GM12878 (cell line): ENCODE measurements at regions of chr2 and their contacts with region 1.

Region 1: DNA sequence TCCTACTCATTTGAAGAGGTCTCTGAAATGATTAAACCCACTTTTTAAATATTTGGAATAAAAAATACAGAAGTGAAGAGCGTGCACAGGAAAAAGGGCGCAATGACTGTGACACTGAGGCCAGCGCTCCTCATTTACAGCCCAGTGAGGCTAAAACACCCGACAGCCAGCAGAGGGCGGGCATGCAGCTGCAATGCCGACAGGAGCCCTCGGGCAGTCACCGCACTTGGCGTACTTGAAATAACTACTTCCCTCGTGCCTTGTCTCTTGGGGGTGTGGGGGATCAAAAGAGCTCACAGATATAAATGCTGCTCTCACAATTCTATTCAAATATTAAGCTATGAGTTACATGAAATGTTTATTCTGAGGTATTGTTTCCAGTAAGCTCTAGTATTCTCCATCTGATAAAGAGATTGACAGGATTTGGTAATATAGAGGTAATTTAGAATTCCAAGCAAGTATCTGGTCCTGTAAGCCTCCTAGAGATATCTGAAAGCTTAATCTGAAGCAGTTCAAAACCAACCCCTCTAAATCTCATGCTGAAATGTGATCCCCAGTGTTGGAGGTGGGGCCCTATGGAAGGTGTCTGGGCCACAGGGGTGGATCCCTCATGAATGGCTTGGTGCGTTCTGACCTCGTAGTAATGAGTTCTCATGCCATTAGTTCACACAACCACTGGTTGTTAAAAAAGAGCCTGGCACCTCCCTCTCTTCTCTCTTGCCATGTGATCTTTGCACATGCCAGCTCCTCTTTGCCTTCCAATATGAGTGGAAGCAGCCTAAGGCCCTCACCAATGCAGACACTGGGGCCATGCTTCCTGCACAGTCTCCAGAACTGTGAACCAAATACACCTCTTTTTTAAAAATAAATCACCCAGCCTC is 93.6 kb downstream of the ZAP70 start:
- DNase-seq: peak; percentile 9
- ATAC-seq: peak; percentile 100
- H3K4me3 ChIP-seq: no peak overlapping the region
- H3K27ac ChIP-seq: no peak overlapping the region
- H3K4me1 ChIP-seq: no peaks in the 10 kb centered on the region
- H3K27me3 ChIP-seq: no peaks in the 10 kb centered on the region
- CTCF ChIP-seq: peak; percentile 93 to 95 (median 93); a peak in 5 of 6 replicates
- EP300 ChIP-seq: no peak
- POLR2A ChIP-seq: no peak
- RAD21 ChIP-seq: peak; percentile 99

Region 2: DNA sequence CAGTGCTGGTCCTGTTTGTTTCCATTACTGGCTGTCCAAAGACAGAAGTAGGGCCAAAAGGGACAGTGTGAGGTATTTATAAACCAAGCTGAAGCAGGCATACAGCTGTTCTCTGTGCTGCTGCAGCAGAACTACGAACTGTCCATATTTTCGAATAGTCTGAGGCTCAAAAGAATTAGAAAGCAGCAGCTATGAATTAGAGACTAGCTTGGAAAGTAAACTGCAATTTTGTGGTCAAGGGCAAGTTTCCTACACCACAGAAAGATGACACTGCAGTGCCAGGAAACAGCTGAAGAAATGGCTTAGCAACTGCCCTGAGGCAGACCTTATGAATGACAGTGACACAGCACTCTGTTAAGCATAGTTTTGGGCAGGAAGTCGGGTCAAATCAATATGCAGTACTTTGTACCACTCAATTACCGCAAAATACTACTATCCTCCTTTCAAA is 63.4 kb after region 1 on chr2:
- CTCF ChIA-PET with region 1: interaction called, 8 read pairs
- POLR2A ChIA-PET with region 1: no interaction called
- RAD21 ChIA-PET with region 1: interaction called, 11 read pairs
- SMC1A ChIA-PET with region 1: interaction called, 12 read pairs
- in situ Hi-C with region 1: no loop called
- intact Hi-C with region 1: no loop called
- DNase-seq: peak; percentile 87
- ATAC-seq: peak; percentile 100
- H3K4me3 ChIP-seq: no peak overlapping the region
- H3K27ac ChIP-seq: peak overlapping the region; percentile 33; the same call in 1 of the 2 replicates
- H3K4me1 ChIP-seq: peaks cover 20% of the 10 kb centered on the region
- H3K27me3 ChIP-seq: no peaks in the 10 kb centered on the region
- CTCF ChIP-seq: peak in 2 of 3 experiments; percentile 13 to 66; a peak in 3 of 6 replicates
- EP300 ChIP-seq: peak in 1 of 2 experiments; percentile 41; a peak in 1 of 4 replicates
- POLR2A ChIP-seq: no peak
- RAD21 ChIP-seq: peak; percentile 64

Region 3: DNA sequence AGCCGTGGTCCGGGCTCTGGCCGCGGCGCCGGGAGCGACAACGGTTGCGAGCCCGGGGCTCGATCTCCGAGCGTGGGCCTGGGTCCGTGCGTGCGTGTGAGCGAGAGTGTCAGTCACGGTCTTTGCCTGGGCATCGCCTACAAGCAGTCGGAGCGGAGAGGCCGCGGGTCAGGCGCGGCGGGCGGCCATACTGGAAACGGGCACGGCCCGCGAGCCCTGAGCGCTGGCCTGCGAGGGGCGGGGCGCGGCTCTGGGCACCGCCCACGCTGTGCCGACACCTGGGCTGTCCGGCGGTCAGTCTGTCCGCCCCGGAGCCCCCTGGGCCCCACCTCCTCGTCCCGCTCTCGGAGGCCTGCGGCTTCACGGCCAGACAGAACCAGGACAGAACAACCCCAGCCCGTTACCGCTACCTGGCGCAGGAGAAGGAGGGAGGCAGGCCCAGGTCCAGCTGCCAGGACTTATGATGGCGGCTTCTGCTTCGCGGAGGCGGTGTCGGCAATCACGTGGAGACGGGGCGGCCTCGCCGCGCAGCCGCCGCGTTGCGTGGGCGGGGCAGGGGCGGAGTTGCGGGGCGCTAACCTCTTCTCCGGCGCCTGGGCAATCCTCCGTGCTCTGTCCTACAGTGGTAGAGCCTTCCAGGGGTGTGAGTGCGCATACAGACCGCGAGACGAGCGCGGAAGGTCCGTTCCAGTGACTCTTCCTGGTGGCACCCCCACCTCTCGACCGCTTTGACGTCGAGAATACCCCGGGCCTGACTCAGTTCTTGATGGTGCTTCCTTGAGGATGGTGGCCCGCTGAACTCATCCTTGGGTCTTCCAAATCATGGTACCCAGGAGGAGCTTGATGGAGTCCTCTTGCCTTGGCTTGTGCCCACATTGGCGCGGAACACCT is 189.0 kb after region 1 on chr2 and contains the start of gene TMEM131:
- CTCF ChIA-PET with region 1: interaction called, 7 read pairs
- POLR2A ChIA-PET with region 1: interaction called, 4 read pairs
- RAD21 ChIA-PET with region 1: interaction called, 9 read pairs
- SMC1A ChIA-PET with region 1: interaction called, 9 read pairs
- in situ Hi-C with region 1: no loop called
- intact Hi-C with region 1: loop called (anchors 1 kb)
- DNase-seq: peak; percentile 74
- ATAC-seq: peak; percentile 85
- H3K4me3 ChIP-seq: peak within 1 kb of the TSS; percentile 83
- H3K27ac ChIP-seq: peak within 1 kb of the TSS; percentile 94
- H3K4me1 ChIP-seq: peaks cover 9% of the 10 kb centered on the region
- H3K27me3 ChIP-seq: no peaks in the 10 kb centered on the region
- CTCF ChIP-seq: no peak
- EP300 ChIP-seq: peak in 1 of 2 experiments; percentile 5; a peak in 1 of 4 replicates
- POLR2A ChIP-seq: peak; percentile 88
- RAD21 ChIP-seq: no peak
- polyA plus RNA-seq, gene TMEM131: 6.0 to 8.1 TPM

Region 4: DNA sequence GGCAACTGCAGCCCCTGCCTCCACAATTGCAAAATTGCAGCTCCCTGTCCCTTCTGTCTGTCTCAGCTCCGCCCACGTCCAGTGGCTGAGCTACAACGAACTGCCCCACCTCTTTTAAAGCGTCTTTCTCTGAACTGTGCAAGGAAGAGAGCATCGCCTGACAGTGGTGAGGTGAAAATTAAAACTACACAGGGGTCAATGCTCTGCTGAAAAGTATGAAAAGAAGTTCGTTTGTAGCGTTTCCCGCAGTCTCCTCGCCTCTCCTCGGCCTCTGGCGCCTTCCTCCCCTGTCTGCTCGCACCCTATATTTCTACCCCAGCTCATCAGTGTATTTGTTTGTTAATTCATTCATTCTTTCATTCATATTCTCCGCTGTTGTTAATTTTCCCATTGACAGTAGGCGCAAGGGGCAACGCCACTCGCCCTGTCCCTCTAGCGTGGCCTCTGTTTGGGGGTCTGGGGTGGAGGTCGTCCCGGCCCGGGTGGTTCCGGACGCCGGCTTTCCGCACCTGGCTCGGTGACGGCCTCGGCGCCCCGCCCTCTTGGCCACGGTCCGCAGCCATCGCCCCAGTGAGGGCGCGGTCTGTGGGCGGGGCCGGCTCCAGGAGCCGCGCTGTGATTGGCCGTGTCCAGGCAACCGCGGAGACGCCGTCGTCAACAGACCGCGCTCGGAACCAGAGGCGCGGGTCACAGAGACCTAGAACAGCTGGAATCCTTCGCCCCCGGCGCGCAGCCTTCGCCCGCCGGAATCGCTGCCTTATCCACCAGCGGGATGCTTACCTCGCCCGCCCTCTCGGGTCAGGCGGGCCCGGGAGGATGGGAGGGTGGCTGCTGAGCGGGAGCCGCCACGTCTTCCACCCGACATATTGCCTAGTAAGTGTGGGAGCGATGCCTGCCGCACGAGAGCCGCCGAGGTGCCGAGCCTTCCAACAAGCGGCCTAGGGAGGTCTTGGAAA is 279.8 kb after region 1 on chr2 and contains the start of gene VWA3B:
- CTCF ChIA-PET with region 1: interaction called, 6 read pairs
- POLR2A ChIA-PET with region 1: no interaction called
- RAD21 ChIA-PET with region 1: interaction called, 4 read pairs
- SMC1A ChIA-PET with region 1: interaction called, 14 read pairs
- in situ Hi-C with region 1: no loop called
- intact Hi-C with region 1: loop called (anchors 5 kb)
- DNase-seq: no peak
- ATAC-seq: peak; percentile 96
- H3K4me3 ChIP-seq: peak within 1 kb of the TSS; percentile 82
- H3K27ac ChIP-seq: no peak within 1 kb of the TSS
- H3K4me1 ChIP-seq: peaks cover 13% of the 10 kb centered on the region
- H3K27me3 ChIP-seq: no peaks in the 10 kb centered on the region
- CTCF ChIP-seq: no peak
- EP300 ChIP-seq: no peak
- POLR2A ChIP-seq: no peak
- RAD21 ChIP-seq: no peak
- polyA plus RNA-seq, gene VWA3B: not detected

Region 5: DNA sequence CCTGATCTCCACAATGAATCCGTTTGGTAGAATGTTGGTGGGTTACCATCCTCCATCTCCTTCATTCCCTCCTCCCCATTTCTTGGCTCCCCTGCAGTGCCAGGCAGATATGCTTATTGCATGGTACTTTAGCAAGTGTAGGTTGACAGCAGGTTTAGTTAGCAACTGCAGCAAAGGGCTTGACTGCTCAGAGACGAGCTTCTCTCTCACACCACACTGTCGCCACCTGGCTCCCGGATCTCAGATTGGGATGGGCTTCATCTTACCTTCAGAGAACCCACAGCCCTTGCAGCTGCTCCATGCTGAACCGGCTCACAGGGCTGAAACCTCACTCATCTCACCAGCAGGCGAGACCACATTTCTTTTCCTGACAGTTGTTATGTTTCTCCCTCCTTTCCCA is 368.8 kb after region 1 on chr2:
- CTCF ChIA-PET with region 1: interaction called, 17 read pairs
- POLR2A ChIA-PET with region 1: no interaction called
- RAD21 ChIA-PET with region 1: interaction called, 16 read pairs
- SMC1A ChIA-PET with region 1: interaction called, 14 read pairs
- in situ Hi-C with region 1: loop called (anchors 25 kb)
- intact Hi-C with region 1: no loop called
- DNase-seq: no peak
- ATAC-seq: peak; percentile 75
- H3K4me3 ChIP-seq: no peak overlapping the region
- H3K27ac ChIP-seq: no peak overlapping the region
- H3K4me1 ChIP-seq: no peaks in the 10 kb centered on the region
- H3K27me3 ChIP-seq: peaks cover 0 to 4% of the 10 kb centered on the region in 2 experiments; a peak in 1 of 4 replicates
- CTCF ChIP-seq: peak; percentile 30 to 53 (median 34); a peak in 4 of 6 replicates
- EP300 ChIP-seq: no peak
- POLR2A ChIP-seq: no peak
- RAD21 ChIP-seq: peak; percentile 65

Region 6: GRCh38 chr2:98269274-98269673 is 462.3 kb after region 1 on chr2:
- CTCF ChIA-PET with region 1: interaction called, 25 read pairs
- POLR2A ChIA-PET with region 1: no interaction called
- RAD21 ChIA-PET with region 1: interaction called, 11 read pairs
- SMC1A ChIA-PET with region 1: interaction called, 6 read pairs
- in situ Hi-C with region 1: loop called (anchors 5 kb)
- intact Hi-C with region 1: loop called (anchors 1 kb)
- DNase-seq: no peak
- ATAC-seq: peak; percentile 91
- H3K4me3 ChIP-seq: no peak overlapping the region
- H3K27ac ChIP-seq: no peak overlapping the region
- H3K4me1 ChIP-seq: no peaks in the 10 kb centered on the region
- H3K27me3 ChIP-seq: no peaks in the 10 kb centered on the region; a peak in 1 of 4 replicates
- CTCF ChIP-seq: peak; percentile 54 to 76 (median 66)
- EP300 ChIP-seq: no peak
- POLR2A ChIP-seq: no peak
- RAD21 ChIP-seq: peak; percentile 78

Region 7: DNA sequence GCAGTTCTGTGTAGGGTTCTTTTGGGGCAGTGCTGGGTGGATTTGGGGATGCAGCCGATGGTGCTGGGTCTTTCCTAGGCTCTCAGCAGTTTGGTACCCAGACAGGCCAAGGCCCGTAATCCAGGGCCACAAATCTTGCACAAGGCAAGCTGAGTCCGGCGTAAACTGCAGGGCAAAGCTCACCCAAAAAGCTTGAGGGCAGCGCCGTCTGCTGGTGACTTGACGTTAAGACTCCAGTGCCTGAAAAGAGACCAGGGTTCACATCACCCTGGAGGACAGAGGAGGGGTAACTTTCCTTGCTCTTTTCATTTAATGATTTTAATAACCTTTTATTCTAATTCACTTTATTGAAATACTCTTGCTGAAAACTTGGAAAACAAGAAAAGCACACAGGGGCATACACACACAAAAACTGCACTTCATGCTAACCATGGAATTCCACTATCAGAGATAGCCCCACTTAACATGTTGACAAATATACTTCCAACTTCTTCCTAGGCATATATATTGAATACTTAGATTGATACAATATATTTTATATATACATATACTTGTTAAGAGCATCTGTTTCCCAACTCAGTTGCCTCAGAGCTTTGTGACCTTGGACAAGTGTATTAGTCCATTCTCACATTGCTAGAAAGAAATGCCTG is 578.2 kb after region 1 on chr2:
- CTCF ChIA-PET with region 1: interaction called, 17 read pairs
- POLR2A ChIA-PET with region 1: no interaction called
- RAD21 ChIA-PET with region 1: interaction called, 13 read pairs
- SMC1A ChIA-PET with region 1: interaction called, 25 read pairs
- in situ Hi-C with region 1: loop called (anchors 5 kb)
- intact Hi-C with region 1: loop called (anchors 1 kb)
- DNase-seq: peak; percentile 11
- ATAC-seq: peak; percentile 99
- H3K4me3 ChIP-seq: no peak overlapping the region
- H3K27ac ChIP-seq: no peak overlapping the region
- H3K4me1 ChIP-seq: no peaks in the 10 kb centered on the region
- H3K27me3 ChIP-seq: peaks cover 0 to 2% of the 10 kb centered on the region in 2 experiments; a peak in 3 of 4 replicates
- CTCF ChIP-seq: peak; percentile 98 to 100 (median 99); a peak in 5 of 6 replicates
- EP300 ChIP-seq: no peak
- POLR2A ChIP-seq: no peak
- RAD21 ChIP-seq: peak; percentile 99